ENCODE measurements at regions of chr5 and their contacts with region 1.

Region 1: DNA sequence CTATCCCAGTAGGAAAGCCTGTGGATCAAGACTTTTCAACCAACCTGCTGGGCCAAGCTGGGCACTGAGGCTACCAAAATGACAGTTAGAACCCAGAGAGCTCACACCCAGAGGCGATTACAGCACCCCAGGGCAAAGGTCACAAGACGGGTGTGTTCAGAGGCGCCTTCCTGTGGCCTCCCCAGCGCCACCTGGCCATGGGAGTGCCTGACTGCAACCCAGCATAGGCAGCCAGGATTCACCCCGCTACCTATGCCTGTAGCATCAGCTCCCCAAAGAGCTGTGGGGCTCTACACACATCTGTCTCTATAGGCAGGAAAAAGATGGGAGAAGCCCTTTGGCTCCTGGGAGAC is 33.5 kb downstream of the PDGFRB start:
- DNase-seq: peak in 1 of 2 experiments; percentile 57
- H3K4me3 ChIP-seq: no peak overlapping the region
- H3K27ac ChIP-seq: no peak overlapping the region
- H3K4me1 ChIP-seq: peaks cover 7% of the 10 kb centered on the region
- H3K27me3 ChIP-seq: no peaks in the 10 kb centered on the region
- CTCF ChIP-seq: peak; percentile 68

Region 2: GRCh38 chr5:150464554-150465012 is 342.4 kb after region 1 on chr5:
- CTCF ChIA-PET with region 1: interaction called, 19 read pairs
- POLR2A ChIA-PET with region 1: no interaction called
- intact Hi-C with region 1: no loop called
- DNase-seq: no peak
- H3K4me3 ChIP-seq: no peak overlapping the region
- H3K27ac ChIP-seq: no peak overlapping the region
- H3K4me1 ChIP-seq: peaks cover 15% of the 10 kb centered on the region
- H3K27me3 ChIP-seq: no peaks in the 10 kb centered on the region
- CTCF ChIP-seq: no peak